Right ventricle myocardium inferior (tissue), 1 donor: ENCODE measurements at regions of chr16 and their contacts with region 1.

Region 1: DNA sequence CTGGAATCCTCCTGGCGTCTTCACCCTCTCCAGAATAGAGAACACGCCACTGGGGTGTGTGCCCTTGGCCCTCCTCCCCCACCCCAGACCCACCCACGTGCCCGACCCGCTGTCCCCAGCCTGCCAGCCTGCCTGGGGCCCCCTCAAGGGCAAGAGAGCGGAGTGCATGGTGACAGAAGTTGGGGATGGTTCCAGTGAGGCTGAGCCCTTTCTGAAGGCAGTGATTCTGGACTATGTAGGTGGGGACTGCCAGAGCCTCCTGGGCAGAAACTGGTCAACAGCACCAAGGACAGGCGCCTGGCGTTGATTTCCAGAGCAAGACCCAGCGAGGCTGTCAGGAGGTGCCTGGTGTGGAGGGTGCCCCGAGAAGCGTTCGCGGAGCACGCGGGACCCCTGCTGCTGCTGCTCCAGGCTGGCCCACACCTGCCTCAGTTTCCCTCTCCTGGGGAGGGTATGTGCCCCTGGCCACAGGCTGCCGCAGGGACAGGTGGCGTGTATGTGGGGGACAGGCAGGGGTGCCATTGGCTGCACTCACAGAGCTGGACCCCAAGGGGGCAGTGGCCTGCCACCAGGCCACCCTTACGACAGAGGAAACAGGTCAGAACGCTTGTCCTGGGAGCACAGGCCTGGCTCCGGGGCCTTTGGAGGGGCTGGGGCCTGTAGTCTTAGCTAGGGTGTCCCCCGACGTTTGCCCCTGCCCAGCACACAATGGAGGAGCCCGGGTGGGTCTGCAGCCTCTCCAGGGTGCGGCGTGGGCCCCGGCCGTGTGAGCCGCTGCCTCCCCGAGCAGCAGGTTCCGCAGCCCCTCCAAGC is 1.2 kb downstream of the SSTR5 start:
- DNase-seq: no peak
- ATAC-seq: peak; percentile 67

Region 2: DNA sequence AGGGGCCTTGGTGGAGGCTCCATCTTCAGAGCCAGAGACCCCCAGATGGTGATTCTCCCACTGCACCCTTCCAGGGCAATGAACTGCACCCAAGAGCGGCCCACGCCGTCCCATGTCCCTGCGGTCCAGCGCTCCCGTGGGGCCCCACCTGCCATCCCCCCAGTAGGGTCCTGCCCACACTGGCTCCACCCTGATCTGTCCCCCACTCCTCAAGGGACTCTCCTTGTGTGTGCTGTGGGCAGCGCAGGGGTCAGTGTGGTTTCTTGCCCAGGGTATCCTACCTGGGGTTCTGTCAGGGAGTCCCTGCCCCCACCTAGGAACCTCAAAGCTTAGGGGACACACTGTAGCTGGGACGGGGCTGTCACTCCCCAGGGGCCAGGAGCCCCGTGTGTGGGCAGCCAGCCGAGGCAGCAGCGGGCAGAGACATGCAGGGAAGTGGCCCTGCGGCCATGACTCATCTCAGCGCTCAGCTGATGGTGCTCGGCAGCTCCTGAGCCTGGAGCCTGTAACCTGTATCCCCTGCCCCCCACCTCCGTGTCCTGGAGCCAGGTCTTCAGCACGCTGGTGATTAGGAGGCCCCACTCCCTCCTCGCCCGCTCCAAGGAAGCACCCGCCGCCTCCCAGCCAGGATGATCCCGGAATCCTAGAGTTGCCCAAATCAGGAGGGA is 36.9 kb before region 1 on chr16:
- intact Hi-C with region 1: no loop called
- DNase-seq: peak; percentile 34
- ATAC-seq: no peak

Region 3: DNA sequence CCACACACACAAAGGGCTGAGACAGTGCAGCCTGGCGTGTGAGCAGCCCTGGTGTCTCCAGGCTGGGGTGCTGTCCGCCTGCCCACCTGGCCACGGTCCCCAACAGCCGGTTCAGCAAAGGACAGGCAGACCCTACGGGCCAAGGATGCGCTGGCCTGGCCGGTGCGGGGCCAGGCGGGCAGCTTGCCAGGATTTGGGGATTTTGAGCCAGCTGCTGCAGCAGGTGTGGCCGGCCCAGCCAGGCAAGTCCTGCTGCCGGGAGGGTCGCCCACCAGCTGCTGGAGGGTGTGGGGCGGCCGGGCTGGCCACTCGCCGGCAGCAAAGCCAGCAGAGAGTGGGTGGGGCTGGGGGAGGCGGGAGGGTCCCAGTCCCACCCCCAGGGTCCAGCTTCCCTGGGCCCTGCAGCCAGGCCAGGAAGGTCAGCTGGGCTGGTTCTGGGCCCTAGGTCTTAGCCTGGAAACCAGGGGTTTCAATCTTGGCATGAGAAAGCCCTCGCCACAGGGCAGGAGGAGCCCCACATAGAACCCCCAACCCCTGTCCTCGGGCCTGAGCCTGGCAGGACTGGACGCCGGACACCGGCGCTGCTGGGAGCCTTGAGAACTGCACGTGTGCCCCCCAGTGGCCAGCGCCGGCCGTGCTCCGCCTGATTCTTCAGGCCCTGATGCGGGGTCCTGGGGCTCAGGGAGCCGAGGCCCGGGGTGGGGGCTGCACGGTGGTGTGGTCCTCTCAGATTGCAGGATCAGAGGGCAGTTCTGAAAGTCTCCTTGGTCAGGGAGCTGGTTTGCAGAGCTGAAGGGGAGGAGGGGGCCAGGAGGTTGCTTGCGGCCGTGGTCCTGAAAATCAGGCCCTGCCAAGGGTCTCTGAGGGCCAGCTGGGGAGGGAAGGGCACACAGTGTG is 18.9 kb before region 1 on chr16:
- intact Hi-C with region 1: no loop called
- DNase-seq: peak; percentile 44
- ATAC-seq: peak; percentile 75

Region 4: DNA sequence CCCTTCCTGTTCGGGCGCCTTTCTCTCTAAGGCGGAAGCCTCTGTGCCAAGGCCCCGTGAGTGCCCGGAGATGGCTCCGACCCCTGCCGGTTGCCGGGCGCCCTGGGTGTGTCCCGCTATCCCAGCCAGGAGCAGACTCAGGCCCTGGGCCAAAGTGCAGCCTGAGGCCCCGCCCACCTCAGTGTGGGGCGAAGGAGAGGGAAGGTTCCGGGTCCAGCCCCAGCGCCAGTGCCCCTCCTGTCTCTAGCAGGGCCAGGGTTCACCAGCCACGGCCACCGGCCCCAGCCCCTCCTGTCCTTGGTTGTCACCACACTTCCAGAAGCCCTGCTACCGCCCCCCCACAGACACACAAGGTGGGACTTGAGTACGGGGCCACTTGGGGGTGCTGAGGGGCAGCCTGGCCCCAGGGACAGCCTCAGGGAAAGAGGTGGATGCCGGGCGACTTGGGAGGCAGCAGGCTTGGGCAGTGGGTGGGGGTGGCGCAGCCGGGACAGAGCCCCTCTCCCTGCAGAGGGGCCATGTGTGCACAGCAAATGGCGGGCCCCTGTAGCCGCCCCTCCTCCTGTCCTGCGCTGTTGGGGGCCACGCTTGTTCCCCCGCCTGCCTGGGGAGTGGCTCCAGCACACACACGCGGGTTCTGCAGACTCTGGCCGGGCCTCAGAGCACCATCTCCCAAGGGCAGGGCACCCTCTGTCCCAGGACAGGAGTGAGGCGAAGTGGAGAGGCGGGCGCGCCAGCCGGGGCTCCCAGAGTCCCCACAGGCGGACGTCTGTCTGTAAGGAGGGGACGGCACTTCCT is 16.2 kb after region 1 on chr16:
- intact Hi-C with region 1: loop called (anchors 2 kb)
- DNase-seq: no peak
- ATAC-seq: peak; percentile 87

Region 5: GRCh38 chr16:1097800-1098199 is 24.0 kb after region 1 on chr16:
- intact Hi-C with region 1: loop called (anchors 2 kb)
- DNase-seq: peak; percentile 84
- ATAC-seq: peak; percentile 92